Gastrocnemius medialis (tissue), 4 donors: ENCODE measurements at regions of chr17 and their contacts with region 1.

Region 1: DNA sequence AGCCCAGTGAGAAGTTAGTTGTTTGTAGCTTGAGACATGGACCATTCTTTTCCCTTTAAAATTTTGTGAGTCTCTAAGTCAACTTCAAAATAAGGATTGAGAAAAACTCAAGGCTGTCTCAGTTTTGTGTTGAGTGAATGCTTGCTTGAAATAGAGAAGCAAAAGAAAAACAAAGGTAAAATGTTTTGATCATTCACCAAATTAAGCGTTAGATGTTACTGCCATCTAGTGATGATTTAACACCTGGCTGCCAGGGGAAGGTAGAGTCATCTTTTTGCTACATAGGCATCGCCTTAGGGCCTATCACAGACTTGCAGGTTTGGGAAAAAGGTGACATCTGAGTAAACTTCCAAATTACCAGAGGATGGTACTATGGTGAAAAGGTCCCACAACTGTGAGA is 74.4 kb downstream of the PCTP start:
- DNase-seq: no peak
- ATAC-seq: peak in 1 of 2 donors; percentile 66
- H3K4me3 ChIP-seq: no peak overlapping the region
- H3K27ac ChIP-seq: no peak overlapping the region
- H3K4me1 ChIP-seq: no peaks in the 10 kb centered on the region
- H3K27me3 ChIP-seq: no peaks in the 10 kb centered on the region
- CTCF ChIP-seq: peak in 4 of 5 experiments; percentile 16 to 61 (median 47)
- POLR2A ChIP-seq: no peak

Region 2: DNA sequence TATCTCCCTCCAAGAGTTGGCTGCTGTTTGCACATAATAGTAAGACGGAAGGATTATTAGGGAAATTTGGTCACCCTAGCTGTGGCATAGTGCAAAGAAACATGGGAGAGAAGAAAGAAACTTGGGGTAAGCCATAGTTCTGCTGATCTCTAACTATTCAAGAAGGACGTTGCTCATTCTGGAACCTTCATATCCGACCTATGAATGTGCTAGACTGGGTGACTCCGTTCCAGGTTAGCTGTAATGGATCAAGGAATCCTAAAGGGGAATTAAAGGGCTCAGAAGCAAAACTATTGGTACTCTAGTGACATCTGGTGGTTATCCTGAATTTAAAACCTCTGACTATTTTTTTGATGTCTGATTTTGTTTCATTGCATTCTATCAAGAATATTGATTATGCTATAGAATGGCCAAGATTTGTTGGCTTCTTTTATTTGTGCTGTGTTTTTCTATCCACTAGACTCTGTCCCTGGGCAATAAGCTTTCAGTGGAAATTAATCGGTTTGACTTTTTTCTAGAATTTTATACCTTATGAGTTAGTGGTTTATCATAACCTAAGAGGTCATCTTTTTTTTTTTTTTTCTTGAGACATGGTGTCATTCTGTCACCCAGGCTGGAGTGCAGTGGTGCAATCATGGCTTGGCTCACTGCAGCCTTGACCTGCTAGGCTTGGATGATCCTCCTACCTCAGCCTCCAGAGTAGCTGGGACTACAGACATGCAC is 54.9 kb before region 1 on chr17:
- in situ Hi-C with region 1: loop called in 2 of 4 experiments (anchors 5 to 10 kb)
- intact Hi-C with region 1: loop called (anchors 2 kb)
- DNase-seq: no peak
- ATAC-seq: peak; percentile 70 to 83
- H3K4me3 ChIP-seq: no peak overlapping the region
- H3K27ac ChIP-seq: peak overlapping the region; percentile 20 to 48 (median 38)
- H3K4me1 ChIP-seq: peaks cover 10 to 13% of the 10 kb centered on the region in 2 donors
- H3K27me3 ChIP-seq: no peaks in the 10 kb centered on the region
- CTCF ChIP-seq: peak; percentile 69 to 75 (median 72)
- POLR2A ChIP-seq: no peak